MCF 10A (cell line): ENCODE measurements at regions of chr10 and their contacts with region 1.

Region 1: GRCh38 chr10:64977915-64978314 is 1456.7 kb downstream of the REEP3 start:
- DNase-seq: no peak
- H3K4me3 Mint-ChIP-seq: no peak overlapping the region
- H3K27ac Mint-ChIP-seq: no peak overlapping the region
- H3K4me1 Mint-ChIP-seq: no peaks in the 10 kb centered on the region
- H3K27me3 Mint-ChIP-seq: no peaks in the 10 kb centered on the region
- CTCF ChIP-seq: no peak

Region 2: GRCh38 chr10:64846700-64847099 is 131.2 kb before region 1 on chr10:
- CTCF ChIA-PET with region 1: no interaction called
- POLR2A ChIA-PET with region 1: no interaction called
- intact Hi-C with region 1: no loop called
- DNase-seq: no peak
- H3K4me3 Mint-ChIP-seq: no peak overlapping the region
- H3K27ac Mint-ChIP-seq: no peak overlapping the region
- H3K4me1 Mint-ChIP-seq: no peaks in the 10 kb centered on the region
- H3K27me3 Mint-ChIP-seq: no peaks in the 10 kb centered on the region
- CTCF ChIP-seq: no peak

Region 3: GRCh38 chr10:66180581-66181318 is 1202.8 kb after region 1 on chr10:
- CTCF ChIA-PET with region 1: interaction called, 4 read pairs
- POLR2A ChIA-PET with region 1: no interaction called
- intact Hi-C with region 1: loop called (anchors 1 kb)
- DNase-seq: peak; percentile 68
- H3K4me3 Mint-ChIP-seq: no peak overlapping the region
- H3K27ac Mint-ChIP-seq: no peak overlapping the region
- H3K4me1 Mint-ChIP-seq: no peaks in the 10 kb centered on the region
- H3K27me3 Mint-ChIP-seq: no peaks in the 10 kb centered on the region
- CTCF ChIP-seq: peak; percentile 59

Region 4: DNA sequence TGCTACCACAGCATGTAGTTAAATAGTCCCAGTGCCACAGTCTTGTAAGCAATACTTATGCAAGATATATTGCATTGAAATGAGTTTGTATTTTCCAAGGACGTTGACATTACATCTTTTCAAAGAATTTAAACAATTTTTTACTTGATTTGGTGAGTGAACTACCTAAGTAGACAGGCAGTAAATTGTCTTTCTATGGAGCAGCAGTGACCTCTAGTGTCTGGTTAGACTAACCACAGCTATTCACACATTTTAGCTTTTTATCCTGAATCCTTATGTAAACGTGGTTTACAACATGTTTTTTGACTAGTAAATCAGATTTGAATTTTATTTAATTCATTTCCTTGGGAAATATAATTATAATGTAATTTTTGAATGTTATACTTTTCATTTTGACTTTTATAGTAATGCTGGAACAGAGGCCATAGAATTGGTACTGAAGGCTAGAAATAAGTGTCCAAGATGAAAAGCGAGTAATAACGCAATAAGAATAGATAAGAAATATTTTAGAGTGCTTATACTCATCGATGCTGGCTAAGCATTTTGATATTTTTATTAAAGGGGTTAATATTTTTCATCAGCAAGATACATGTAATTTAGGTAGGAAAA is 1953.5 kb after region 1 on chr10:
- CTCF ChIA-PET with region 1: no interaction called
- POLR2A ChIA-PET with region 1: interaction called, 3 read pairs
- intact Hi-C with region 1: loop called (anchors 5 kb)
- DNase-seq: peak; percentile 72
- H3K4me3 Mint-ChIP-seq: no peak overlapping the region
- H3K27ac Mint-ChIP-seq: no peak overlapping the region
- H3K4me1 Mint-ChIP-seq: no peaks in the 10 kb centered on the region
- H3K27me3 Mint-ChIP-seq: peaks cover 52% of the 10 kb centered on the region
- CTCF ChIP-seq: peak; percentile 86